ENCODE measurements at regions of chr1 and their contacts with region 1.

Region 1: GRCh38 chr1:26009796-26010460 is 11.6 kb upstream of the EXTL1 start:
- DNase-seq: peak; percentile 45
- ATAC-seq: peak; percentile 72
- H3K4me3 Mint-ChIP-seq: no peak overlapping the region
- H3K27ac Mint-ChIP-seq: no peak overlapping the region
- H3K4me1 Mint-ChIP-seq: peaks cover 22% of the 10 kb centered on the region
- H3K27me3 Mint-ChIP-seq: no peaks in the 10 kb centered on the region; the same call in 1 of the 2 replicates
- CTCF ChIP-seq: no peak

Region 2: GRCh38 chr1:25819576-25820246 is 190.2 kb before region 1 on chr1 and contains the start of gene MTFR1L:
- CTCF ChIA-PET with region 1: interaction called, 11 read pairs
- POLR2A ChIA-PET with region 1: no interaction called
- DNase-seq: peak; percentile 84
- ATAC-seq: peak; percentile 81
- H3K4me3 Mint-ChIP-seq: peak within 1 kb of the TSS; percentile 98
- H3K27ac Mint-ChIP-seq: peak within 1 kb of the TSS; percentile 95
- H3K4me1 Mint-ChIP-seq: peaks cover 35% of the 10 kb centered on the region
- H3K27me3 Mint-ChIP-seq: peaks cover 10% of the 10 kb centered on the region
- CTCF ChIP-seq: no peak
- total RNA-seq, gene MTFR1L: 28.9 to 32.2 TPM (median 30.5 TPM) in 3 replicates

Region 3: GRCh38 chr1:25997828-25998761 is 11.8 kb before region 1 on chr1 and contains the start of gene PAFAH2:
- CTCF ChIA-PET with region 1: interaction called, 20 read pairs
- POLR2A ChIA-PET with region 1: no interaction called
- DNase-seq: peak; percentile 97
- ATAC-seq: peak; percentile 99
- H3K4me3 Mint-ChIP-seq: peak within 1 kb of the TSS; percentile 90
- H3K27ac Mint-ChIP-seq: peak within 1 kb of the TSS; percentile 67
- H3K4me1 Mint-ChIP-seq: peaks cover 25% of the 10 kb centered on the region
- H3K27me3 Mint-ChIP-seq: no peaks in the 10 kb centered on the region
- CTCF ChIP-seq: peak; percentile 83
- total RNA-seq, gene PAFAH2: 9.4 to 11.8 TPM (median 11.5 TPM) in 3 replicates

Region 4: DNA sequence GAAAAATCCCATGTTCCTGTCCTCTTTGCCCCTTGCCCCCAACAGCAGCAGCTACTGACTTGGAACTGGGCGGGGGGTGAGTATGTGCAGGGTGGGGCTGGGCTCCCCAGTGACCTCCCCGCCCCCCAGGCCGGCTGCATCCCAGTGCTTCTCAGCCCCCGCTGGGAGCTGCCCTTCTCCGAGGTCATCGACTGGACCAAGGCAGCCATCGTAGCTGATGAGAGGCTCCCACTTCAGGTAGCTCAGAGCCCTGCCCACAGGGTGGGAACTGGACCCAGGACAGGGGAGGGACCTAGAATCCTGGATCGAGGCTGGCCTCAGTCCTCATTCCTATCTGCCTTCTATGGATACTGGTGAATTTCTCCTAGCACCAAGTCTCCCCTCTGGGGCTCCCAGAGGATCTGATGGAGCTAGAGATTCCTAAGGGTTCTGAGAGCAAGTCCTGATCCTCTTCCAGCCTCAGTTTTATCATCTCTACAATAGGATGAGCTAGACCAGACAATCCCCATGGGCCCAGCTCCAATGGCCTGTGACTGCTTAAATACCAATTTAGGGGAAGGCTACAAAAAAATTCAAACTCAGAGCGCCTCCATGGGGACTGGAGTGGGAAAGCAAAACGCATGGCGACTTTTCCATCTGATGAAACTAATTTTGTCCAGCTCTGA is 19.7 kb after region 1 on chr1:
- CTCF ChIA-PET with region 1: interaction called, 22 read pairs
- POLR2A ChIA-PET with region 1: no interaction called
- DNase-seq: no peak
- ATAC-seq: peak; percentile 34
- H3K4me3 Mint-ChIP-seq: no peak overlapping the region
- H3K27ac Mint-ChIP-seq: no peak overlapping the region
- H3K4me1 Mint-ChIP-seq: peaks cover 6% of the 10 kb centered on the region; the same call in 1 of the 2 replicates
- H3K27me3 Mint-ChIP-seq: peaks cover 31% of the 10 kb centered on the region
- CTCF ChIP-seq: no peak